Natural killer cell (primary cell): ENCODE measurements at regions of chr6 and their contacts with region 1.

Region 1: DNA sequence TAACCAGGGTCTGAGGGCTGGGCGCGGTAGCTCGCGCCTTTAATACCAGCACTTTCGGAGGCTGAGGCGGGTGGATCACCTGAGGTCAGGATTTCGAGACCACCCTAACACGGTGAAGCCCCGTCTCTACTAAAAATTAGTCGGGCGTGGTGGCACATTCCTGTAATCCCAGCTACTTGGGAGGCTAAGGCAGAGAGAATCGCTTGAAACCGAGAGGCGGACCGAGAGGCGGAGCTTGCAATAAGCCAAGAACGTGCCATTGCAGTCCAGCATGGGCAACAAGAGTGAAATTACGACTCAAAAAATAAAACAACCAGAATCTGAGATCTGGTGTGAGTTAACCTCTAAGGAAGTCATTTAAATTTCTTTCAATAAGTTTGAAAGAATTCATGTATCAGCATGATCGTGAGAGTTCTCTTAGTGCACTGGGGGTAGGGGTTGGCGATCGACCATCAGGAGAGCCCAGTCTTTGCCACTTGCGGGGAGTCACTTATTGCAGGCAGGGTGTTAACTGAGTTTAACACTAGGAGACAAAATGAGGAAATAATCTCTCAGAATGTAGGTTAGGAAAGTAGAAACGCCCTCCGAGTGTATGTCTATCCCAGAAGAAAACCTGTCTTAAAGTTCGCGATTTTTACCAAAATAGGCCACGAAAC is 206.5 kb upstream of the ZNF184 start:
- DNase-seq: no peak
- ATAC-seq: no peak
- H3K4me3 ChIP-seq: no peak overlapping the region
- H3K4me3 Mint-ChIP-seq: peak overlapping the region; percentile 17
- H3K27ac ChIP-seq: no peak overlapping the region
- H3K27ac Mint-ChIP-seq: peak overlapping the region in 1 of 2 donors; percentile 57
- H3K4me1 ChIP-seq: no peaks in the 10 kb centered on the region
- H3K4me1 Mint-ChIP-seq: peaks cover 7 to 9% of the 10 kb centered on the region in 2 donors
- H3K27me3 ChIP-seq: peaks cover 53% of the 10 kb centered on the region
- H3K27me3 Mint-ChIP-seq: peaks cover 60 to 83% of the 10 kb centered on the region in 2 donors
- CTCF ChIP-seq: no peak

Region 2: GRCh38 chr6:27553123-27553904 is 126.1 kb before region 1 on chr6:
- intact Hi-C with region 1: loop called (anchors 5 kb)
- DNase-seq: no peak
- ATAC-seq: no peak
- H3K4me3 ChIP-seq: no peak overlapping the region
- H3K4me3 Mint-ChIP-seq: no peak overlapping the region
- H3K27ac ChIP-seq: no peak overlapping the region
- H3K27ac Mint-ChIP-seq: no peak overlapping the region
- H3K4me1 ChIP-seq: no peaks in the 10 kb centered on the region
- H3K4me1 Mint-ChIP-seq: peaks cover 4 to 5% of the 10 kb centered on the region in 2 donors
- H3K27me3 ChIP-seq: peaks cover 64% of the 10 kb centered on the region
- H3K27me3 Mint-ChIP-seq: peaks cover 55 to 76% of the 10 kb centered on the region in 2 donors
- CTCF ChIP-seq: no peak